K562 (cell line): ENCODE measurements at regions of chr14 and their contacts with region 1.

Region 1: GRCh38 chr14:24108336-24108874 is 6.2 kb upstream of the DCAF11 start:
- DNase-seq: no peak
- ATAC-seq: no peak
- H3K4me3 ChIP-seq: no peak overlapping the region
- H3K27ac ChIP-seq: no peak overlapping the region; the same call in 2 of the 3 replicates
- H3K4me1 ChIP-seq: peaks cover 0 to 3% of the 10 kb centered on the region in 2 experiments; a peak in 2 of 5 replicates
- H3K27me3 ChIP-seq: no peaks in the 10 kb centered on the region
- CTCF ChIP-seq: no peak
- EP300 ChIP-seq: no peak
- POLR2A ChIP-seq: no peak
- RAD21 ChIP-seq: no peak

Region 2: DNA sequence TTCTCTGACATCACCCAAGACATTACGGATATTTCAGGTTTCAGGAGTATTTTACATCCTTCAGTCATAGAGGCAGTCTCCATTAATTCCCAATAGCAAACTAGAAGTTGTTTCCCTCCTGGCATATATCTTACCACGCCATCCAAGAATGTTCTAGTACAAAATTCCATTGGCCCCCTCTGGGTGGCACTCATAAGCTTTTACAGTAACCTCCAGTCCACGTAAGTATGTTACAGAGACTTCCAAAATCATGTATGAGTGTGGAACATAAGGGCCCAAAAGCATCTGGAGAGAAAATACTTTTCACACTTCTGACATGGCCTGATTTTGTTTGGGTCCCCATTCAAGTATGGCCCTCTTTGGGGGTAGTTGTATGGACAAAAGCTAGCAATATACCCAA is 212.9 kb before region 1 on chr14:
- CTCF ChIA-PET with region 1: no interaction called
- POLR2A ChIA-PET with region 1: no interaction called
- in situ Hi-C with region 1: no loop called
- intact Hi-C with region 1: loop called (anchors 5 kb)
- DNase-seq: peak in 2 of 4 experiments; percentile 10 to 13
- ATAC-seq: peak; percentile 78; the same call in 2 of the 3 replicates
- H3K4me3 ChIP-seq: no peak overlapping the region
- H3K27ac ChIP-seq: no peak overlapping the region
- H3K4me1 ChIP-seq: no peaks in the 10 kb centered on the region; a peak in 3 of 5 replicates
- H3K27me3 ChIP-seq: peaks cover 0 to 1% of the 10 kb centered on the region in 2 experiments; a peak in 1 of 5 replicates
- CTCF ChIP-seq: peak; percentile 6 to 51 (median 39); a peak in 2 of 6 replicates
- EP300 ChIP-seq: no peak
- POLR2A ChIP-seq: no peak
- RAD21 ChIP-seq: peak; percentile 38 to 59

Region 3: GRCh38 chr14:23953464-23954278 is 154.7 kb before region 1 on chr14 and contains the start of gene DHRS4:
- CTCF ChIA-PET with region 1: no interaction called
- POLR2A ChIA-PET with region 1: no interaction called
- in situ Hi-C with region 1: no loop called
- intact Hi-C with region 1: no loop called
- DNase-seq: peak; percentile 66 to 76 (median 70)
- ATAC-seq: peak; percentile 97
- H3K4me3 ChIP-seq: peak within 1 kb of the TSS; percentile 63
- H3K27ac ChIP-seq: peak within 1 kb of the TSS; percentile 55
- H3K4me1 ChIP-seq: peaks cover 0 to 10% of the 10 kb centered on the region in 2 experiments; a peak in 2 of 5 replicates
- H3K27me3 ChIP-seq: no peaks in the 10 kb centered on the region
- CTCF ChIP-seq: peak; percentile 80 to 83 (median 82)
- EP300 ChIP-seq: no peak
- POLR2A ChIP-seq: peak; percentile 65
- RAD21 ChIP-seq: peak; percentile 67 to 73
- polyA plus RNA-seq, gene DHRS4: 0.51 to 1.6 TPM

Region 4: GRCh38 chr14:24058260-24058950 is 50.0 kb before region 1 on chr14:
- CTCF ChIA-PET with region 1: interaction called, 7 read pairs
- POLR2A ChIA-PET with region 1: interaction called, 12 read pairs
- in situ Hi-C with region 1: no loop called
- intact Hi-C with region 1: loop called (anchors 1 kb)
- DNase-seq: peak in 2 of 4 experiments; percentile 59 to 64
- ATAC-seq: peak; percentile 92
- H3K4me3 ChIP-seq: no peak overlapping the region
- H3K27ac ChIP-seq: no peak overlapping the region
- H3K4me1 ChIP-seq: peaks cover 0 to 6% of the 10 kb centered on the region in 2 experiments; a peak in 3 of 5 replicates
- H3K27me3 ChIP-seq: peaks cover 0 to 19% of the 10 kb centered on the region in 2 experiments; a peak in 2 of 5 replicates
- CTCF ChIP-seq: peak; percentile 72 to 82 (median 76)
- EP300 ChIP-seq: no peak
- POLR2A ChIP-seq: no peak
- RAD21 ChIP-seq: peak; percentile 83 to 92

Region 5: GRCh38 chr14:24206260-24207103 is 98.1 kb after region 1 on chr14:
- CTCF ChIA-PET with region 1: no interaction called
- POLR2A ChIA-PET with region 1: no interaction called
- in situ Hi-C with region 1: no loop called
- intact Hi-C with region 1: no loop called
- DNase-seq: no peak
- ATAC-seq: no peak
- H3K4me3 ChIP-seq: no peak overlapping the region
- H3K27ac ChIP-seq: no peak overlapping the region
- H3K4me1 ChIP-seq: peaks cover 8 to 13% of the 10 kb centered on the region in 2 experiments; a peak in 4 of 5 replicates
- H3K27me3 ChIP-seq: no peaks in the 10 kb centered on the region
- CTCF ChIP-seq: no peak
- EP300 ChIP-seq: no peak
- POLR2A ChIP-seq: no peak
- RAD21 ChIP-seq: no peak